Activated CD8-positive, alpha-beta memory T cell treated with anti-CD3 and anti-CD28 coated beads, Interleukin-2, amount 10 ng/mL, durations not matched to agents 7 days and 5 days (primary cell): ENCODE measurements at regions of chr12 and their contacts with region 1.

Region 1: GRCh38 chr12:54439521-54440255 is 20.6 kb upstream of the ITGA5 start:
- DNase-seq: no peak
- ATAC-seq: peak; percentile 87
- H3K4me3 Mint-ChIP-seq: no peak overlapping the region
- H3K27ac Mint-ChIP-seq: no peak overlapping the region
- H3K4me1 Mint-ChIP-seq: peaks cover 2% of the 10 kb centered on the region
- H3K27me3 Mint-ChIP-seq: peaks cover 16% of the 10 kb centered on the region

Region 2: GRCh38 chr12:54398995-54399793 is 40.5 kb before region 1 on chr12:
- CTCF ChIA-PET with region 1: interaction called, 705 read pairs
- DNase-seq: peak; percentile 90
- ATAC-seq: peak; percentile 88
- H3K4me3 Mint-ChIP-seq: no peak overlapping the region
- H3K27ac Mint-ChIP-seq: no peak overlapping the region
- H3K4me1 Mint-ChIP-seq: peaks cover 26% of the 10 kb centered on the region
- H3K27me3 Mint-ChIP-seq: no peaks in the 10 kb centered on the region

Region 3: DNA sequence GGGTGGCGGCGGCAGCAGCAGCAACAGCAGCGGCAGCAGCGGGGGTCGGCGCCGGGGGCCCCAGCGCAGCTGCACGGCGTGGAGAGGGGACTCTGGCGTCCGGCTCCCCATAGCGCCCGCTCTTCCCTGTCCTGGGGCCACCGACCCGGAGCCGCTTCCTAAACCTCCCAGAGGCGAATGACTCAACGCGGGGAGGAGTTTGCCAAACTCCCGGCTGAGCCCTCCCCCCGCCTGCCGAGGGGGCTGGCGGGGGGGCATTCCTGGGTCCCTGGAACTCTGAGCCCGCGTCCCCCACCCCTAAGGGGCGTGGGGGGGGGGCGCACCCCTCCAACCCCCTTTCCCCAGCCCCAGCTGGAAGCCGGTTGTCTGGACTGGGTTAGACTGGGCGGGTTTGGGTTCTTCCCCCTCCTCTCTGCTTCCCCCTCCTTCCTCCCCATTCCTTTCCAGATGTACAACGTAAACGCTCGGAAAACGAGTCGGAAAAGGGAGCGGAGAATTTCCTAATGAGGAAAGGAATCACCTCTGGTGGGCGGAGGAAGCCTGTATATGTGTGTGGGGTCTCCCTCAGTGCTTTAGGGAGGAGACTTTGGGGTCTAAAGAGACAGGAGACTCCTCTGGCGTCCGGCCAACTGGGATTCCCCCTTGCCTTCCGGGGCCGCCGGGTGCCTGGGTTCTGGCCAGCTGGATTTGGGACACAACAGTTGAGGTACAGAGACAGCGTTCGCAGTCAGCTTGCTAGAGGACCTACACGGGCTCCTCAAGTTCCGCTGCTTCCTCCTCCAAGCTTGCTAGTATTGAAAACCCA is 20.4 kb before region 1 on chr12 and contains the start of gene ITGA5:
- CTCF ChIA-PET with region 1: interaction called, 55 read pairs
- DNase-seq: peak; percentile 56
- ATAC-seq: peak; percentile 66
- H3K4me3 Mint-ChIP-seq: peak within 1 kb of the TSS; percentile 88
- H3K27ac Mint-ChIP-seq: peak within 1 kb of the TSS; percentile 82
- H3K4me1 Mint-ChIP-seq: peaks cover 44% of the 10 kb centered on the region
- H3K27me3 Mint-ChIP-seq: peaks cover 36% of the 10 kb centered on the region
- total RNA-seq, gene ITGA5: 13.2 to 37.6 TPM

Region 4: DNA sequence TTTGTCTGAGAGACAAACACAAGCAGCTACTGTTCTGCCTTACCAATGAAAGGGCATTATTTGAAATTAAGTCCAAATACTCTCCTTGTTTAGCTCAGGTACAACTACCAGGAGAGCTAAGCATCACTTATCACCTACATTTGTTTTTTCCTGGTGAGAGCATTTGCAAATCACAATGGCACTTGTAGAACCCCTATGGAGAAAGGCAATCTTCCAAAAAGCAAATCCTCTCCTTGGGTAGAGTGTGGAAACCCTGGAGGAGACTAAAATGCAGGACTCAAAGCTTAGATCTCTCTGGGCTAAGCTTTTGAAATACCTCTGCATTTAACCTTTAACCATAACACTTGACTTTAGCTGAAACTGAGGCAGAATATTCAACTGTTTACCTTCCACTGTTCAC is 12.9 kb after region 1 on chr12:
- CTCF ChIA-PET with region 1: interaction called, 22 read pairs
- DNase-seq: no peak
- ATAC-seq: no peak
- H3K4me3 Mint-ChIP-seq: no peak overlapping the region
- H3K27ac Mint-ChIP-seq: no peak overlapping the region
- H3K4me1 Mint-ChIP-seq: no peaks in the 10 kb centered on the region
- H3K27me3 Mint-ChIP-seq: peaks cover 11% of the 10 kb centered on the region

Region 5: DNA sequence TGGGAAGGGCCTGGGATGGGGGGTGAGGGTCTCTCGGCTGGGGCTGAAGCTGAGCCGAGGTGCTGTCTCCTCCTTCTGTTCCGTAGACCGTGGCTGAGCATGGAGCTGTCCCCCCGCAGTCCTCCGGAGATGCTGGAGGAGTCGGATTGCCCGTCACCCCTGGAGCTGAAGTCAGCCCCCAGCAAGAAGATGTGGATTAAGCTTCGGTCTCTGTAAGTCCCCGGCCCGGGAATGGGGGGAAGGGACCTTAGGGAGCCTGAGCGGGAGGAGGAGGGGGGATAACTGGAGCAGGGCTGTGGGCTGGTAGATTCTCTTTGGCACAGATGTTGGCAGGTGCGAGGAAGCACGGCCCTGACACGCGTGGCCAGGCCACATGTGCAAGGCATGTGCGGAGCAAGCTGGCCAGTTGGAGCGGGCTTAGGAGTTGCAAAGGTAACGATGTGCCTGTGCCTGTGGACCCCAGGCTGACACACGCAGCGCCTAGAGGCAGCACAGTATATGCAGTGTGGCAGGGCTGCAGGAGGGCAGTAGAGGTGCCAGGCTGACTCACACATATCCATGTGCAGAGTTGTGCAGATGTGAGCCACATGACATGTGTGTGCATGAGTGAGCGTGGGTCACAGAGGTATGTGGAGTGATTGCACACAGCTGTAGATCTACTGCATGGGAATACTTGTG is 110.2 kb after region 1 on chr12:
- CTCF ChIA-PET with region 1: no interaction called
- DNase-seq: peak; percentile 41
- ATAC-seq: peak; percentile 7
- H3K4me3 Mint-ChIP-seq: peak overlapping the region; percentile 54
- H3K27ac Mint-ChIP-seq: no peak overlapping the region
- H3K4me1 Mint-ChIP-seq: peaks cover 14% of the 10 kb centered on the region
- H3K27me3 Mint-ChIP-seq: peaks cover 28% of the 10 kb centered on the region

Region 6: DNA sequence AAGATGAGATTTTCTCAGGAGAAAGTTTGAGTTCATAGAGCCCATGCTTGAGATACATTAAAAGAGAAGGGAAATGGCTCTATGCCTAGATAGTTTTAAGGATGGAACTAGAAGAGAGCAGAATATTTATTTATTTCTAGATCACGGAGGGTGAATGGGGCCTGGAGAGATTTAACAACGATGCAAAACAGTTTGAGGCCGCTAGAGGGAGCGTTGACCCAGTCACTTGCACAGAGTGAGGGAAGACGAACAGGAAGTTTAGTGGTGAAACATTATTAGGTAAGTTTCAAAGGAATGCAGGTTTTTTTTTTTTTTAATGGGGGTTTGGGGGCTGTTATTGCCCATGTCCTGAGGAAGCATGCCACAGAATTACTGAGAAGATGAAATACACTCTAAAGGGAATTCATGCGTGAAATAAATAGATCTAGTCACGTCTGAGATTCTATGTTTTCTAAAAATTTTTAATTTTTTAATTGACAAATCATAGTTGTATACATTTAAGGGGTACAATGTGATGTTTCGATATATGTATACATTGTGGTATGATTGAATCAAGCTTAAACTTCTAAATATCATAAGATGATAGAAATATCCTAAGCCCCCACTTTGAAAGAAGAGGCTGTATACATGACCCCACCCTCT is 163.6 kb after region 1 on chr12:
- CTCF ChIA-PET with region 1: no interaction called
- DNase-seq: peak; percentile 81
- ATAC-seq: peak; percentile 90
- H3K4me3 Mint-ChIP-seq: no peak overlapping the region
- H3K27ac Mint-ChIP-seq: no peak overlapping the region
- H3K4me1 Mint-ChIP-seq: peaks cover 4% of the 10 kb centered on the region
- H3K27me3 Mint-ChIP-seq: peaks cover 20% of the 10 kb centered on the region